Activated CD8-positive, alpha-beta T cell treated with anti-CD3 and anti-CD28 coated beads, Interleukin-2, amount 10 ng/mL, durations not matched to agents 7 days and 5 days (primary cell): ENCODE measurements at regions of chr9 and their contacts with region 1.

Region 1: DNA sequence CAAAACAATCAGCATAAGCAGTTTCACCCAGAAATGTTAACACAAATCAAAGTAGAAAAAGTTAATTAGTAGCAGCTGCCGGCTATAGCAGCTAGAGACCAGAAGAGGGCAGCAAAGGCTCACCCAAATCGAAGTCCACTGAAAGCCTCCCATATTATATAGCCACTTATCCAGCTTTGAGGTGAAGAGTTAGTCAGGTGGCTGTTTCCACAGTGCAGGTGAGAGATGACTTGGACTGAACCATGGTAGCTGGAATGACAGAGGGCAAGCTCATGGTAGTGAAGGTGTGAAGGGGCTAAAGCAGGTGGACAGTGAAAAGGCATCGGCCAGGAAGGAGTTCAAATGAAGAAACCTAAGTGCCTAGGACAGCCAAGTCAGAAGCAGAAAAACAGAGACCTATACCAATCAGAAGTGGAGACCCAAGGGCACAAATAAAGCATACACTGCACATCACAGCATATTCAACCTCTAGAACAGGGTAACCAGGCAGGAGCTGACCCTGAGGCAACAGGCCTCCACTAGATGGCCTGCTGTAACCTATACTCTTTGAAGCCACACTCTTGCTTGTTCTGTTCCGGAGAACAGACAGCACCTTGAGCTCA is 7.2 kb upstream of the RNF38 start:
- DNase-seq: peak; percentile 75
- ATAC-seq: peak; percentile 88
- H3K4me3 Mint-ChIP-seq: no peak overlapping the region
- H3K27ac Mint-ChIP-seq: no peak overlapping the region
- H3K4me1 Mint-ChIP-seq: peaks cover 12% of the 10 kb centered on the region
- H3K27me3 Mint-ChIP-seq: no peaks in the 10 kb centered on the region

Region 2: DNA sequence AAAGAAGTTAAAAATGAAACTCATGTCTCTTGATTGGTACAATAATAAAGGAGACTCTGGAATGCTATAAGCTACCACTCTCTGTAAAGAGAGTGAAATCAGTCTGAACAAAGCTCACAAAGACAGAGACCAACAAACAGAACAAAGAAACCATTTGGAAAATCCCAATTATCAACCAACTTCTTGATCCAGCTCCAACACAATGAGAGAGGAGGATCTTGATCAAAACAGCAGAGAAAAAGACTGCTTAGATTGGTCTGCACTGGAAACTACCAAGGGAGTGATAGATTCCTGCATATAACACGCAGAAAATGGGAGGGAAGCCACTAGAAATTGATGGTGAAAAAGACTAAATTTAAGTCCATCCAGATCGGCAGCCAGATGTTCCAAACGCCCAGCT is 16.0 kb after region 1 on chr9:
- CTCF ChIA-PET with region 1: interaction called, 41 read pairs
- POLR2A ChIA-PET with region 1: interaction called, 3 read pairs
- DNase-seq: no peak
- ATAC-seq: no peak
- H3K4me3 Mint-ChIP-seq: no peak overlapping the region
- H3K27ac Mint-ChIP-seq: no peak overlapping the region
- H3K4me1 Mint-ChIP-seq: peaks cover 16% of the 10 kb centered on the region
- H3K27me3 Mint-ChIP-seq: no peaks in the 10 kb centered on the region

Region 3: DNA sequence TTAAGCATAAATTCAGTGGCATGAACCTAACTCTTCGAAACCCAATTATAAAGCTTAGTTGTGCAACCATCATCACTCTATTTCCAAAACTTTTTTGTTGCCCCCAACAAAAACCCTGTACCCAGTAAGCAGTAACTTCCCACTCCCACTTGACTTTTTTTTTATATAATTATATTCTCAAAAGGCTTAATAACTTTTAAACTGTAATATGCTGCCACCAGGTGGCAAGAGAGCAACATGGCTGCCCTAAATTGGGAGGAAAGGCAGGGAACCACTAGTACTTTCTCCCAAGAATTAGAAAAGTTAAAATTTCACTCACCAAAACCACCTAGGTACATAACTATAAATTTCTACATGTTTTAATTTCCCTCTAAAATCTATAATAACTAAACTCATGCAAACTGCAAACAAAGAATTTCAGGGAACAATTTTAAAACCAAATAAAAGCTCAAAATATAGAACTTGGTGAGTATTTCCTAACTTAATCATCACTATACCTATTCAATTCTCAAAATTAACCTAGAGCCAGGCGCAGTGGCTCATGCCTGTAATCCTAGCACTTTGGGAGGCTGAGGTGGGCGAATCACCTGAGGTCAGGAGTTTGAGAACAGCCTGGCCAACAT is 43.0 kb after region 1 on chr9:
- CTCF ChIA-PET with region 1: interaction called, 79 read pairs
- POLR2A ChIA-PET with region 1: no interaction called
- DNase-seq: peak; percentile 35
- ATAC-seq: no peak
- H3K4me3 Mint-ChIP-seq: no peak overlapping the region
- H3K27ac Mint-ChIP-seq: no peak overlapping the region
- H3K4me1 Mint-ChIP-seq: peaks cover 6% of the 10 kb centered on the region
- H3K27me3 Mint-ChIP-seq: no peaks in the 10 kb centered on the region

Region 4: DNA sequence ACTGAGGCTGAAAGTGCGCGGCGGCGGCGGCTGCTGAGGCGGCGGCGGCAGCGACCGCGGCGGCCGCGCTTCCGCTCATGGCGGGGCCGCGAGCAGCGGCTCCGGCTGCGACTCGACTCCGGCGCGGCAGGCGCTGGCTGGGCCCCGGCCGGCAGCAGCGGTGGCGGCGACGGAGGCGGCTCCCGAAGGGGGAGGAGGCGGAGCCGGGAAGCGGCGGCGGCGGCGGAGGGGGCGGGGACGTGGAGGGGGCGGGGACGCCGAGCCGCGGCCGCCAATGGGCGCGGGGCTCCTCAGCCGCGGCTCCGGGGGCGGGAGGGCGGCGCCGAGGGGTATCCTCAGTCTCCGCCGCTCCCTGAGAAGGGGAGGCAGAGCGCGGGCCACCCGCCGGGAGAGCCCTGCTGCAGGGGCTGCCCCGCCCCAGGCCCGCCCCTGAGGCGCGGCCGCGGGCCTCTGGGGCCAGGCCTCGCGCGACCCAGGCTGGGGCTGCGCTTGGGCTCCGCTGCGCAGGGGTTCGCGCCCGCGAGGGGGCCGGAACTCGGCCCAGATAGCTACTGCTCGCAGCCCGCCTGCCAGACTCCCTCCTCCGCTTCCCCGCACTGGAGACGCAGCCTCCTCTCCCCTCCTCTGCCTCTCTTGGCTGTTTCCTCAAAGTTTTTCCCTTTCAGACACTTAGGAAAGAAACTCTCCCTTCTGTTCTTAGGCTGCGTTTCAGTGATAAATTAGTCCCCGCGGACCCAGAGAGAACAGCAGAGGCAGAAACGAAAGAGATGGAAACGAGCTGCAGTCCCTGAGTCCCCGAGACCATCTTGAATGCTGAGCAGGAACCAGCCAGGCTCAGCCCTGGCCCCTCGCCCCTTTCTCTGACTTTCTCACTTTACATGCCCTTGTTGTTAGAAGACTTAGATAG is 80.5 kb after region 1 on chr9:
- CTCF ChIA-PET with region 1: interaction called, 35 read pairs
- POLR2A ChIA-PET with region 1: interaction called, 10 read pairs
- DNase-seq: peak; percentile 90
- ATAC-seq: peak; percentile 94
- H3K4me3 Mint-ChIP-seq: peak overlapping the region; percentile 96
- H3K27ac Mint-ChIP-seq: peak overlapping the region; percentile 99
- H3K4me1 Mint-ChIP-seq: peaks cover 58% of the 10 kb centered on the region
- H3K27me3 Mint-ChIP-seq: no peaks in the 10 kb centered on the region

Region 5: GRCh38 chr9:36566813-36567221 is 159.6 kb after region 1 on chr9:
- CTCF ChIA-PET with region 1: interaction called, 25 read pairs
- POLR2A ChIA-PET with region 1: no interaction called
- DNase-seq: no peak
- ATAC-seq: no peak
- H3K4me3 Mint-ChIP-seq: no peak overlapping the region
- H3K27ac Mint-ChIP-seq: no peak overlapping the region
- H3K4me1 Mint-ChIP-seq: peaks cover 5% of the 10 kb centered on the region
- H3K27me3 Mint-ChIP-seq: peaks cover 12% of the 10 kb centered on the region

Region 6: GRCh38 chr9:36728651-36729520 is 321.7 kb after region 1 on chr9:
- CTCF ChIA-PET with region 1: interaction called, 14 read pairs
- POLR2A ChIA-PET with region 1: no interaction called
- DNase-seq: peak; percentile 73
- ATAC-seq: peak; percentile 74
- H3K4me3 Mint-ChIP-seq: no peak overlapping the region
- H3K27ac Mint-ChIP-seq: no peak overlapping the region
- H3K4me1 Mint-ChIP-seq: no peaks in the 10 kb centered on the region
- H3K27me3 Mint-ChIP-seq: no peaks in the 10 kb centered on the region